Sciatic nerve (tissue), 2 donors: ENCODE measurements at regions of chr2 and their contacts with region 1.

Region 1: GRCh38 chr2:61196671-61197070 is 34.7 kb downstream of the C2orf74 start:
- DNase-seq: no peak
- ATAC-seq: no peak

Region 2: GRCh38 chr2:61185329-61185728 is 11.3 kb before region 1 on chr2:
- intact Hi-C with region 1: loop called (anchors 2 kb)
- DNase-seq: no peak
- ATAC-seq: no peak